Head of caudate nucleus (tissue), 42 donors: ENCODE measurements at regions of chr1 and their contacts with region 1.

Region 1: DNA sequence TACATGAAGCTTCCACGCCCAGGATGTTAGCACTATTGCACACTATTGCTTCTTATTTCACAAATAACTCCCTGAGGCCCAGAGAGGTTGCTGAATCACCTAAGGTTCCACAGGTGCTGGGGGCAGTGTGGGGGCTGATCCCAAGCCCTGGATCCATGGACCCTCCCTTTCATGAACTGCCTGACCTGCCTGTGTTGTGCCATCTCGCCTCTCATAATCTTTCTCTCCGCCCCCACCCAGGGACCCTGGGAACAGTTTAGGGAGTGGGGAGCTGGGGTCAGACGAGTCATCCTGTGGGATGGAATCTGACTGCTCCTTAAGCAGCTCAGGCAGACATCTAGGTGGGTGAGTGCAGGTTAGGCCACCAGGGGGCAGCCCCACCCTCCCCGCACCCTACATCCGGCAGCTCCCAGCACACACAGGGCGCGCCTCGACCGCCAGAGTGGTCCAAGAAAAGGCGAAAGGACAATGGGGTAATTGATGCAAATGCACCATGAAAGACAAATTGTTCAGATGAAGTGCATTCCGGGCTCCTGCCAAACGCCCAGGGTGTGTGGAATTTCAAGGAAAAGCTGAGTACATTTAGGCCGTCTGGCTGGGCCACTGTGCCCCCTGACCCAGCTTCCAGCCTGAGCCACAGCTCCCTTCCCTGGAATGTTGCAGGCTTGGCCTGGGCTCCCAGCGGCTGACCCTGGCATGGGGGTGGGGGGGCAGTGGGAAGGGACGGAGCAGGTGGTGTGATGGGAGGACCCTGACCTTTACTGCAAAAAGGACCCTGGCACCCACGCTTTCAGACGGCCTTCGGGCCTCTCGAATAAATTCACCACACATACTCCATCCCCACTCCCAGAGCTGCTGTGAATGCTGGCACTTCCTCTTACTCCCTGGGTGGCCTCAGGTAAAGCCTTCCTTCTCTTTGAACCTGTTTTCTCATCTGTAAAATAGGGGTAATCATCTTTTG is 20.8 kb downstream of the PHLDA3 start:
- DNase-seq: peak; percentile 65 to 97 (median 89)

Region 2: DNA sequence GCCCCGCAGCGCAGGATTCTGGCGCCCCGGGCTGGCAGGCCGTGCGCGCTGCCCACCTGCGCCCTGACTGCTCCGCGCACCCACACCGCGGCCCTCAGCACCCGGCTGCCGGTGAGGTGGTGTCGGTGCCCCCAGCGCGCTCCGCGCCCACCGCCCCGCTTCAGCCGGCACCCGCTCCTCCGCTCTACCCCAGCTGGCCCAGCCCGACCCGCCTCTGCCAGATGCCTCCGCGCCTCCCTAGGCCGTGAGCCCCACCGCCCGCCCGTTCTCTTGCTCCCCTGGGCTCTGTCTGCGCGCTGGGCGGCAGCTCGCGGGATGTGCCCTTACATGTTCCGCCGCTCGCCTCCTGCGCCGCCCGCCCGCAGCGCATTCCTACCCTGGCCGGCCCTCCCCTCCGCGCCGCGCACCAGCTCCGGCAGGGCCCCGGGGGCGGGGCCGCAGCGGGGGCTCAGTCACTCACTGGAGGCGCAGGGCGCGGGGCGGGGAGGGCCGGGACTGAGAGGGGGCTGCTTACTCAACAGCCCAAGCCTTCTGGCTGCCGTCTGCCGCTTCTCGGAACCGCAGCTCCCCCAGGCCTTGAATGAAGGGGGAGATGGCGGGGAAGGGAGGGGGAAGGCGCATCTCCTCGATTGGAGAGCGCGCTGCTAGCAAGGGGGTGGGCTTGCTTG is 20.8 kb after region 1 on chr1 and contains the start of gene PHLDA3:
- intact Hi-C with region 1: loop called (anchors 2 kb)
- DNase-seq: peak; percentile 81 to 98 (median 93)

Region 3: GRCh38 chr1:201955009-201955728 is 507.0 kb after region 1 on chr1 and contains the start of gene TIMM17A:
- intact Hi-C with region 1: no loop called
- DNase-seq: peak; percentile 95 to 99 (median 98)